ENCODE measurements at regions of chr20 and their contacts with region 1.

Region 1: GRCh38 chr20:45090481-45090880 is 10.4 kb downstream of the KCNS1 start:
- DNase-seq: no peak
- H3K4me3 ChIP-seq: no peak overlapping the region
- H3K27ac ChIP-seq: no peak overlapping the region
- H3K4me1 ChIP-seq: peaks cover 0 to 1% of the 10 kb centered on the region in 2 donors
- H3K27me3 ChIP-seq: no peaks in the 10 kb centered on the region
- CTCF ChIP-seq: no peak
- POLR2A ChIP-seq: no peak

Region 2: GRCh38 chr20:45044084-45044573 is 46.4 kb before region 1 on chr20:
- intact Hi-C with region 1: loop called in 1 of 2 experiments (anchors 5 kb)
- DNase-seq: peak; percentile 48 to 72 (median 56)
- H3K4me3 ChIP-seq: no peak overlapping the region
- H3K27ac ChIP-seq: peak overlapping the region in 3 of 5 donors; percentile 53 to 60 (median 57)
- H3K4me1 ChIP-seq: peaks cover 4 to 6% of the 10 kb centered on the region in 2 donors
- H3K27me3 ChIP-seq: no peaks in the 10 kb centered on the region
- CTCF ChIP-seq: peak; percentile 79 to 95 (median 84)
- POLR2A ChIP-seq: no peak

Region 3: DNA sequence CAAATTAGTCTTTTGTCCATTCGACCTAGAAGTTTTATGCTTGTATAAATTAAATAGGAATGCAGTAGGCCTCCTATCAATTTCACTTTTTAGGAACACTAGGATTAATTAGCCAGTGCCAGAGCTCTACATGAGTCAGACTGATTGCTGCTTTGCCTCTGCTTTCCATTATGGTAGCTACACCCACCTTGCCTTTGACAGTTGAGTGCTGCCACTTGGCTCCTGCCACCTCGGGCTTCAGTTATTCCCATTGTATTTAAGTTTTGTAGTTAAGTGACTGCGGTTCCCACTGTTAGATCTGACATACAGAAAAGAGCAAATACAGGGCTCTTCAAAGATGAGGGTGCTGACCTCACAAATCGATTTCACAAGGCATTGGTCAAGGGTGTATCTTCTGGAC is 50.4 kb after region 1 on chr20:
- intact Hi-C with region 1: no loop called
- DNase-seq: no peak
- H3K4me3 ChIP-seq: no peak overlapping the region
- H3K27ac ChIP-seq: no peak overlapping the region
- H3K4me1 ChIP-seq: no peaks in the 10 kb centered on the region
- H3K27me3 ChIP-seq: peaks cover 5% of the 10 kb centered on the region
- CTCF ChIP-seq: no peak
- POLR2A ChIP-seq: no peak